MCF 10A (cell line): ENCODE measurements at regions of chr12 and their contacts with region 1.

Region 1: GRCh38 chr12:2583091-2583497 is 211.7 kb upstream of the FKBP4 start:
- DNase-seq: peak; percentile 53
- H3K4me3 Mint-ChIP-seq: no peak overlapping the region
- H3K27ac Mint-ChIP-seq: no peak overlapping the region
- H3K4me1 Mint-ChIP-seq: no peaks in the 10 kb centered on the region
- H3K27me3 Mint-ChIP-seq: peaks cover 70% of the 10 kb centered on the region
- CTCF ChIP-seq: peak; percentile 94

Region 2: DNA sequence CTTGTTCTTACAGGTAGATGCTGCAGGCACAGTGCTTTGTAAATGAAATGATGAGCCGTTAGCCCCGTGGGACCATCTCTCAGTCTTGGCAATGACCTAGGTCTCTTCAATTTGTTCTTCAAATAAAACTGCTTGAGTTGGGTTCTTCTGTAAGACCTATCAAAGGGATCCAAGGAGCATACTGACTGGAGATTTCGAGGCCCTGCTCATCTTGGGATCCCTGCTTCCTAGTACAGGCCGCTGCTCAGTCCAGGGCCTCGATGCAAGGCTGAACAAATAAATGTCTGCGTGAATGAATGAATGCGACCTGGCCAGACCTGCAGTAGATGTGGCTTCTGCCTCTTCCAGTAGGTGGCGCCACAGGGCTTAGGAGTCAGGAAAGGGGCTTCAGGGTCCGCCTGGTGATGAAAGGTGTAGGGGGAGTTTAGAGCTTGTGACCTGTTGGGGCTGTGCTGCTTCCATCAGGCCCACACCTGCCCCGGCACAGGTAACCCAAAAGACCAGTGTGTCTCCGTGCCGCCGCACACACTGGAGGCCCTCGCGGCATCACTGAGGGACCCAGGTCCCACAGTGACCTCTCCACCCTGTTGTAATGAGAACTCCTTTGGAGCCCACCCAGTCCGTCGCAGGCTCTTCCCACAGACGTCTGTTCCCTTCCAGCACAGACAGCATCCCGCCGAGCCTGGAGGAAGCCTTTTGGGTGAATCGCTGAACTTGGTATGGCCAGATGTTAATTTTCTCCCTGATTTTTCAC is 525.9 kb before region 1 on chr12:
- CTCF ChIA-PET with region 1: interaction called, 4 read pairs
- POLR2A ChIA-PET with region 1: no interaction called
- intact Hi-C with region 1: loop called (anchors 2 kb)
- DNase-seq: peak; percentile 67
- H3K4me3 Mint-ChIP-seq: no peak overlapping the region
- H3K27ac Mint-ChIP-seq: no peak overlapping the region
- H3K4me1 Mint-ChIP-seq: no peaks in the 10 kb centered on the region
- H3K27me3 Mint-ChIP-seq: peaks cover 26% of the 10 kb centered on the region
- CTCF ChIP-seq: peak; percentile 94

Region 3: DNA sequence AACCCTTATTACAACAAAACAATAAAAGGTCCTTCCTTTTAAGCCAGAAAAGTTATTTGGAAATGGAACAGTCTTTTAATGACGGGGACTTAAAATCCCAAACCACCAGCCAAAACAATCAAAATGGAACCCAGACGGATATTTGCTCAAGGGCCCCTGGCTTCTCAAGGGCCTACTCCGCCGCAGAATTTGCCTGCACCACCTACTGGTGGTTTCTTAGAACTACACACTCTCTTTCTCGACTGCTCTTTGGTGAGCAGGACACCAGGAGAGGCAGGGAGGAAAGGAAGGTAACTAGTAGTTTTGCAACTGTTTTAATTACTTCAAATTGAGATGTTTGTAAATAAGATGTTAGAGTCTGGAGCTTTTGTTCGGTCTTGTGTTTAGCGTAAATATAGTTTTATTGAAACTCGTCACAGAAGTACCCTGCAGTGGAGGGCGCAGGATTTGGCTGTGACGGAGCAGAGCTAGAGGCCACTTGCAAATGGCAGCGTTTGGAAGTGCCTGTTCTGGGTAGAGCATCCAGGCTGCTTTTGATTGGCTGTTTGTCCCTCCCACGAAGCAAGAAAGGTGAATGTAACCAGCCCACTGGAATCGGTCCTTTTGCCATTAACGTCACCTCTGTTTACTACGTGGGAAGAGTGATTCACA is 291.8 kb before region 1 on chr12:
- CTCF ChIA-PET with region 1: interaction called, 3 read pairs
- POLR2A ChIA-PET with region 1: no interaction called
- intact Hi-C with region 1: loop called (anchors 5 kb)
- DNase-seq: peak; percentile 60
- H3K4me3 Mint-ChIP-seq: no peak overlapping the region
- H3K27ac Mint-ChIP-seq: no peak overlapping the region
- H3K4me1 Mint-ChIP-seq: peaks cover 24% of the 10 kb centered on the region
- H3K27me3 Mint-ChIP-seq: no peaks in the 10 kb centered on the region
- CTCF ChIP-seq: peak; percentile 69

Region 4: DNA sequence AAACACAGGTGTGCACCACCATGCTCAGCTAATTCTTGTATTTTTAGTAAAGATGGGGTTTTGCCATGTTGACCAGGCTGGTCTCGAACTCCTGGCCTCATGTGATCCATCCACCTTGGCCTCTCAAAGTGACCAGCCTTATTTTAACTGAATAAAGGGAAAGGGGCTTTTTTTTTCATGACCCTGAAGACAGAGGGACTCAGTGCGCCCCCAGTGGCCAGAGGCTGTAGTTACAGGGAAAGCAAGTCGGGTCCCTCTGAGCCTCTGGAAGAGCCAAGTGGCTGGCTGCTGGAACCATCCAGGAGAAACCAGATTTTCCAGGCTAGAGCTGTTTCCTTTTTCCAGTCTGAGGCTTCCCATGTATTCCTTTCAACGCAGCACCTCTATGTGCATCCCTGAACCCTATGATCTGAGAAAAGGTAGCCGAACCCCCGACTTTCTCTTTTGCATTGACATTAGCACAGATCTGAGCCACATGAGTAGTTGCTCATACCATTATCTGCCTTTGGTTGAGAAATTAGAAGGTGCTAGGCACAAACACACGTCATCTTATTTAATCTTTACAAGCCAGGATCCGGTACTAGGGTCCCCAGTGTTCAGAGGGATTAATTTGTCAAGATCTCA is 187.6 kb before region 1 on chr12:
- CTCF ChIA-PET with region 1: no interaction called
- POLR2A ChIA-PET with region 1: no interaction called
- intact Hi-C with region 1: loop called (anchors 10 kb)
- DNase-seq: peak; percentile 59
- H3K4me3 Mint-ChIP-seq: no peak overlapping the region
- H3K27ac Mint-ChIP-seq: no peak overlapping the region
- H3K4me1 Mint-ChIP-seq: peaks cover 19% of the 10 kb centered on the region
- H3K27me3 Mint-ChIP-seq: peaks cover 11% of the 10 kb centered on the region
- CTCF ChIP-seq: peak; percentile 84